ENCODE measurements at regions of chr9 and their contacts with region 1.

Region 1: GRCh38 chr9:127763918-127764384 is 14.5 kb downstream of the SH2D3C start:
- DNase-seq: peak in 2 of 35 experiments; percentile 25 to 49
- ATAC-seq: peak in 3 of 4 experiments; percentile 30 to 51 (median 31)
- H3K4me3 ChIP-seq: no peak overlapping the region
- H3K4me3 Mint-ChIP-seq: no peak overlapping the region
- H3K27ac ChIP-seq: no peak overlapping the region
- H3K27ac Mint-ChIP-seq: peak overlapping the region; percentile 61 to 75
- H3K4me1 ChIP-seq: peaks cover 27 to 59% of the 10 kb centered on the region in 2 experiments
- H3K4me1 Mint-ChIP-seq: peaks cover 65 to 70% (median 66%) of the 10 kb centered on the region in 3 donors
- H3K27me3 ChIP-seq: no peaks in the 10 kb centered on the region
- H3K27me3 Mint-ChIP-seq: no peaks in the 10 kb centered on the region

Region 2: GRCh38 chr9:127426756-127427155 is 337.2 kb before region 1 on chr9:
- CTCF ChIA-PET with region 1: no interaction called
- POLR2A ChIA-PET with region 1: no interaction called
- DNase-seq: peak in 1 of 35 experiments; percentile 18
- ATAC-seq: no peak
- H3K4me3 ChIP-seq: no peak overlapping the region
- H3K4me3 Mint-ChIP-seq: peak overlapping the region; percentile 8 to 100 (median 54)
- H3K27ac ChIP-seq: no peak overlapping the region
- H3K27ac Mint-ChIP-seq: no peak overlapping the region
- H3K4me1 ChIP-seq: peaks cover 4 to 30% of the 10 kb centered on the region in 2 experiments
- H3K4me1 Mint-ChIP-seq: peaks cover 53 to 64% (median 62%) of the 10 kb centered on the region in 3 donors
- H3K27me3 ChIP-seq: no peaks in the 10 kb centered on the region
- H3K27me3 Mint-ChIP-seq: no peaks in the 10 kb centered on the region

Region 3: DNA sequence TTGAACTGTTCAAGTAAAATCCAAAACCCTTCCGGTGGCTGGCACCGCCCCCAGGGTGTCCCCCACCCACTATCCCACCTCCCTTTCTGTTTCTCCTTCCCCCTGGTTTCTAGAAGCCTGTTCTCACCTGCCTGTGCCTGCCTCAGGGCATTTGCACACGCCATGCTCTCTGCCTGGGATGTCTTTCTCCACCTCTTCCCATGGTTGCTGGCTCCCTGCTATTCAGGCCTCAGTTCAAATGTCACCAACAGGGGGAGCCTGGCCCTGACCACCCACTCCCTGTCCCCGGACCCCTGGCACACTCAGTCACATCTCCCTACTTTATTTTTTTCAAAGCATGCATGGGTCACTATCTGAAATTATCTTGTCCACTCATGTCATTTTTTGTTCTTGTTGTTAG is 256.7 kb after region 1 on chr9:
- CTCF ChIA-PET with region 1: no interaction called
- POLR2A ChIA-PET with region 1: interaction called in 1 of 2 experiments, 12 read pairs
- DNase-seq: no peak
- ATAC-seq: no peak
- H3K4me3 ChIP-seq: no peak overlapping the region
- H3K4me3 Mint-ChIP-seq: peak overlapping the region in 1 of 3 donors; percentile 89
- H3K27ac ChIP-seq: peak overlapping the region; percentile 54
- H3K27ac Mint-ChIP-seq: peak overlapping the region; percentile 97 to 98
- H3K4me1 ChIP-seq: peaks cover 40 to 69% of the 10 kb centered on the region in 2 experiments
- H3K4me1 Mint-ChIP-seq: peaks cover 61 to 68% (median 65%) of the 10 kb centered on the region in 3 donors
- H3K27me3 ChIP-seq: no peaks in the 10 kb centered on the region
- H3K27me3 Mint-ChIP-seq: no peaks in the 10 kb centered on the region

Region 4: GRCh38 chr9:129482521-129483414 is 1718.8 kb after region 1 on chr9:
- CTCF ChIA-PET with region 1: no interaction called
- POLR2A ChIA-PET with region 1: no interaction called
- DNase-seq: peak in 4 of 35 experiments; percentile 27 to 56 (median 38)
- ATAC-seq: peak; percentile 23 to 40 (median 34)
- H3K4me3 ChIP-seq: peak overlapping the region; percentile 38 to 41
- H3K4me3 Mint-ChIP-seq: peak overlapping the region; percentile 68 to 74 (median 71)
- H3K27ac ChIP-seq: peak overlapping the region; percentile 81
- H3K27ac Mint-ChIP-seq: peak overlapping the region; percentile 34 to 57
- H3K4me1 ChIP-seq: peaks cover 3 to 52% of the 10 kb centered on the region in 2 experiments
- H3K4me1 Mint-ChIP-seq: peaks cover 28 to 46% (median 43%) of the 10 kb centered on the region in 3 donors
- H3K27me3 ChIP-seq: peaks cover 0 to 28% of the 10 kb centered on the region in 2 experiments
- H3K27me3 Mint-ChIP-seq: peaks cover 0 to 8% of the 10 kb centered on the region in 2 donors

Measured in T-cell (primary cell).